ENCODE measurements at regions of chr11 and their contacts with region 1.

Region 1: GRCh38 chr11:134253188-134253993 is at the starts of genes ACAD8 and THYN1:
- DNase-seq: peak; percentile 94
- H3K4me3 Mint-ChIP-seq: peak within 1 kb of the TSS; percentile 94
- H3K27ac Mint-ChIP-seq: peak within 1 kb of the TSS; percentile 86
- H3K4me1 Mint-ChIP-seq: peaks cover 46% of the 10 kb centered on the region
- H3K27me3 Mint-ChIP-seq: no peaks in the 10 kb centered on the region
- total RNA-seq, gene ACAD8: 25.6 and 26.2 TPM in 2 replicates
- total RNA-seq, gene THYN1: 55.0 and 58.8 TPM in 2 replicates

Region 2: DNA sequence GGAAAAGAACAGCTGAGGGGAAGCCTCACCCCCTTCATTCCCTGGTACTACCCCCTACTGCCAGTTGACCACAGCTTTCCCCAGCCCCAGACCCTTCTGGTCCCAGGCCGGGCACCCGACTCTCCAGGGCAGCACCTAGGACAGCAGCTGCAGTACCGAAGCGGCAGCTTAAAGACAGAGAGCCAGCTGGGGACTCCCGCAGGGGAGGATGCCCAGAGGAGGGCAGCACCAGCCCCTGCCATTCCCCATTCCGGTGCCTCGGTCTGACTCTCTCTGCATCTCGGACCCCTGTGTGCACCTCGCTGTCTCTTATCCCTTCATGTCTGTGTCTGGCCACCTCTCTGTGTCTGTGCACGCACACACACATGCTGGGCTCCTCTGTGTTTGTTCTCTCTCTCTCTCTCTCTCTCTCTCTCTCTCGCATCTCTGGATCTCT is 306.1 kb before region 1 on chr11:
- intact Hi-C with region 1: loop called (anchors 1 kb)
- DNase-seq: peak; percentile 63
- H3K4me3 Mint-ChIP-seq: peak overlapping the region; percentile 69
- H3K27ac Mint-ChIP-seq: peak overlapping the region; percentile 83
- H3K4me1 Mint-ChIP-seq: peaks cover 80% of the 10 kb centered on the region
- H3K27me3 Mint-ChIP-seq: no peaks in the 10 kb centered on the region

Region 3: DNA sequence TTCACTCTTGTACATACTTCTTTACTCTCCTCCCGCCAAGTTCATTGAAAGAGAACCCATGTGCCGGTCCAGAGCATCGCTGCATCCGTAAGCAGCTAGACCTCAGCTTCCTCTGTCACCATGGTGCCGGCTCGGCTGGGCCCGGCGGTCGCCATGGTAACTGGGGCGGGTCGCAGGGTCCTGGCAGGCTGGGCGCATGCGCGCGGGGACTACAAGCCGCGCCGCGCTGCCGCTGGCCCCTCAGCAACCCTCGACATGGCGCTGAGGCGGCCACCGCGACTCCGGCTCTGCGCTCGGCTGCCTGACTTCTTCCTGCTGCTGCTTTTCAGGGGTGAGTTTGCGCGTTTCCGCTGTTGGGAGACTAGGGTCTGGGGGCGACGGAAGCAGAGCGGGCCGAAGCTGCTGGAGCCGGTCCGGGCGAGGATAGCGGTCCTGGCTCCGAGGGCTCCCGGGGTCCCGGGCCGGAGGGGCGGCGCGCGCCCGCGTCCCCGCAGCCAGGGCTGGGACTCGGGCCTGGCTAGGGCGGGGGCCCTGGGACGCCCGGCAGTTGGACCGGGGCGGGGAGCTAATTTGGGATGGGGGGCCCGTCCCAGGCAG is 184.5 kb before region 1 on chr11 and contains the start of gene JAM3:
- intact Hi-C with region 1: loop called (anchors 2 kb)
- DNase-seq: peak; percentile 97
- H3K4me3 Mint-ChIP-seq: peak within 1 kb of the TSS; percentile 88
- H3K27ac Mint-ChIP-seq: peak within 1 kb of the TSS; percentile 86
- H3K4me1 Mint-ChIP-seq: peaks cover 8% of the 10 kb centered on the region
- H3K27me3 Mint-ChIP-seq: peaks cover 59% of the 10 kb centered on the region
- total RNA-seq, gene JAM3: 3.5 and 3.9 TPM in 2 replicates

Region 4: DNA sequence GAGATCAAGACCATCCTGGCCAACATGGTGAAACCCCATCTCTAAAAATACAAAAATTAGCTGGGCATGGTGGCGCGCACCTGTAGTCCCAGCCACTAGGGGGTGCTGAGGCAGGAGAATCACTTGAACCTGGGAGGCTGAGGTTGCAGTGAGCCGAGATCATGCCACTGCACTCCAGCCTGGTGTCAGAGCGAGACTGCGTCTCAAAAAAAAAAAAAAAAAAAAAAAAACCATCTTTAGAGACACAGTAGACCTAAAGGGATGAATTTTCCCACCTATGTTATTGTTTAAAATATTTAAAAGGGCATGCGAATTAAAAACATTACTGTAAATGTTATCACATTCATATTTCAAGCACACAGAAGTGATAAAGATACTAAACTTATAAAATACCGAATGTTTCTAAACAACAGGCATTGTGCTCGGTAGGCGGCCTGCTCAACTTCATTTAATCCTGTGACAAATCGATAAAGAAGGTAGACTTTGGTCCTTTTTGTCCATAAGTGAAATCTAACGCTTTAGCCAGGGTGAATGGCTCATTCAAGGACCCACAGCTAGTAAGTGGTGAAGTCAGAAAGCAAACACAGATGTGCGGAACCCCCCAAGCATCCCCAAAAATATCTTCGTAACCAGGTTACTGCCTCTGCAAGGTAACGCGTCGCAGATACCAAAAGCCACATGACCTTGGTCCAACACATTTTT is 45.7 kb before region 1 on chr11:
- intact Hi-C with region 1: loop called (anchors 1 kb)
- DNase-seq: peak; percentile 59
- H3K4me3 Mint-ChIP-seq: no peak overlapping the region
- H3K27ac Mint-ChIP-seq: no peak overlapping the region
- H3K4me1 Mint-ChIP-seq: peaks cover 5% of the 10 kb centered on the region
- H3K27me3 Mint-ChIP-seq: no peaks in the 10 kb centered on the region

Region 5: DNA sequence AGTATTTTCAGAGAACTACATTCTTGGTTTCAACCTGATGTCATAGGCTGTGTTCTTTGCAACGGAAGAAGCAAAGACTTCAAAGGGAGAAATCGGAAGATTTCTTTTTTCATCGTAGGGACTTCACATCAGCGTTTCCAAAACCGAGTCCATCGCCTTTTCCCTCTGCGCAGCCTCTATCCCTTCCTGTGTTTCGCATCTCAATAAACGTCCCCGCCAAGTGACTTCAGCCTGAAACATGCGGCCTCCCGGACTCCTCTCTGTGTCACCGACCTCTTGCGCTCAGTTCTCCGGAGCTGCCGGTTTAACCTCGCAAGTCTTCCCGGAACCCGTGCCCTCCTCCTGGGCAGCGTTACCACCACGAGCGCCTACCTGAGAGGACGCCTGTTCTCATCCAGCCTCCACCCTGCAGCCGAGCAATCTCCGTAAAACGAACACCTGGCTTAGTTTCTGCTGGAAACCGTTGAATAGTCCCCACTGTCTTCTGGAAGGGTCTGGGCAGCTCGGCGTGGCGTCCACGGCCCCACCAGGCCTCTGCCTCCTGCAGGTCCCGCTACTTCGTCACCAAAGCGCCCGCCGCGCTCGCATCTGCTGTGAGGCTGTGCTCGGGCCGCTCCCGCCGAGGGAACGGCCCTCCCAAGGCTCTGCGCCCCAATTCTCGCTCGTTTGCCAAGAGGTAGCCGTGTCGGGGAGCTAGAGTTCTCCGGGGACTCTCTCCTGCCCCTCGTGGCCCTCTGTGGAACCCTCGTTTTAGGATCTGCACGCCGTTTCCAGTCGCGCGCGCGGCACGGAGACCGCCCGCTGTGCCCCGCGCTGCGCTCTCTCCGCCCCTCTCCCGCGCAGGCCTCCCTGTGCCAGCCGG is 22.4 kb after region 1 on chr11 and contains the start of gene GLB1L3:
- intact Hi-C with region 1: loop called (anchors 1 kb)
- DNase-seq: peak; percentile 81
- H3K4me3 Mint-ChIP-seq: peak within 1 kb of the TSS; percentile 96
- H3K27ac Mint-ChIP-seq: peak within 1 kb of the TSS; percentile 93
- H3K4me1 Mint-ChIP-seq: peaks cover 53% of the 10 kb centered on the region
- H3K27me3 Mint-ChIP-seq: peaks cover 2% of the 10 kb centered on the region
- total RNA-seq, gene GLB1L3: 14.6 and 16.1 TPM in 2 replicates

Region 6: DNA sequence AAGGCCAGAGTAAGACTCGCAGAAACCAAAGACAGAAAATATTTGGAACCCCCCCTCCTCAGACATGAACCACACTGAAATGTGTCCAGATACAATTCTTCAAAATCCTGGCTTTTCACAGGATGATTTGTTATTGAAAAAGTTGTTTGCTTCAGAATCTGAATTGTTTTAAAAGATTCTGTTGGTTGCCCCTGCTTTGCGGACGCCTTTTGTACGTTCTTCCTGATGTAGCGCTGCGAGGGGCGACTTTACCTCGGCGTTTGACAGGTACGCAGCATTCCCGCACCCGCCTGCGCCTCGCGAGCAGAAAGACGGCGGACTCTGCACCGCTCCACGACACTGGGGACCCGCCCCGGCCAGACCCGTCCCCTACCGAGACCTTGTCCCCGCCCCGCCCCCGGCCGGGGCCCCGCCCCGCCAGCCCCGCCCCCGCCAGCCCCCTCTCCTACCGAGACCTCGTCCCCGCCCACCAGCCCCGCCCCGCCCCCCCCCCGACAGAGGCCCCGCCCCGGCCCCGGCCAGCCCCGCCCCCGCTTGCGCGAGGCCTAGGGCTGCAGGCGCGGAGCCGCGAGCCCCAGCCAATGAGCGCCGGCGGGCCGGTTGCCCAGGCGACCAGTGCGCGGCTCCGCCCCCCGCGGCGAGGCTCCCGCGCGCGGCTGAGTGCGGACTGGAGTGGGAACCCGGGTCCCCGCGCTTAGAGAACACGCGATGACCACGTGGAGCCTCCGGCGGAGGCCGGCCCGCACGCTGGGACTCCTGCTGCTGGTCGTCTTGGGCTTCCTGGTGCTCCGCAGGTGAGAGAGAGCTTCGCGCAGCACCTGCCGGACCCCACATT is 78.2 kb after region 1 on chr11 and contains the start of gene GLB1L2:
- intact Hi-C with region 1: loop called (anchors 1 kb)
- DNase-seq: peak; percentile 84
- H3K4me3 Mint-ChIP-seq: peak within 1 kb of the TSS; percentile 85
- H3K27ac Mint-ChIP-seq: peak within 1 kb of the TSS; percentile 59
- H3K4me1 Mint-ChIP-seq: peaks cover 24% of the 10 kb centered on the region
- H3K27me3 Mint-ChIP-seq: peaks cover 39% of the 10 kb centered on the region
- total RNA-seq, gene GLB1L2: 8.9 and 11.5 TPM in 2 replicates

Region 7: DNA sequence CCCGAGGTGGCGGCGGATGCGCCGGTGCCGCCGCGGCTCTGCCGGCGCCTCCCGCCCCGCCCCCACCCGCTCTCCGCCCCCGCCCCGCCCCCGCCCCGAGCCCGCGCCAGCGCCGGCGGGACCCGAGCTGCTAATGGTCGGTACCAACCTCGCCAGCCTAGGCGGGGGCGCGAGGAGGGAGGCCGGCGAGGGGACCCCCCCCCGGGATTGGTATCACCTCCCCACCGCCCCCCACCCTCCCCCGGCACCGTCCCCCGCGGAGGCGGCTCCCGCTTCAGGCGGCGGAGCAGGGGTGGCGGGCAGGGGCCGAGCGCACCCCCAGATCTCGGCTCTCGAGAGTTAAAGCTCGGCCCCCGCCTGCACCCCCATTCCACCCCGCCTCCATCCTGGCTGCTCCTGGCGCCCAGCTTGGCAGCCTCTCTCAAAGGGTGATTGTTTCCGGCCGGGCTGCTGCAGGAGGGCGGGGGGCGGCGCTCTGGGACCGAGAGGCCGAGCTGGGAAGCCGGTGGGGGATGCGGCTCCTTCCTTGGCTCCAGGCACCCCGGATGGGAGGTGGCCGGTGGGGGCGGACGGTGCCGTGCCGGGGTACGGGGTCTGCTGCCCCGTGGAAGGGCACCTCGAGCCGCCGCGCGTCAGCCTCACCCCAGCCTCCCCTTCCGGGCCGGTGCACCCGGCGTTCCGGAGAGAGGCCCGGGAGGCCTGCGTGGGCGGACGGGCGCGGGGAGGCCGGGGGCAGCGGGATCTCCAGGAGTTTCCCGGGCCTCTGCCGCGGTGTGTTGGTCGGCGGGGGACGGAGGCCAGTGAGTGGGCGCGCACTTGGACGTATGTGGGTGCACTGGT is 159.0 kb after region 1 on chr11 and contains the start of gene B3GAT1:
- intact Hi-C with region 1: loop called (anchors 5 kb)
- DNase-seq: peak; percentile 9
- H3K4me3 Mint-ChIP-seq: peak within 1 kb of the TSS; percentile 54
- H3K27ac Mint-ChIP-seq: no peak within 1 kb of the TSS
- H3K4me1 Mint-ChIP-seq: peaks cover 6% of the 10 kb centered on the region
- H3K27me3 Mint-ChIP-seq: peaks cover 65% of the 10 kb centered on the region
- total RNA-seq, gene B3GAT1: 0.13 and 0.39 TPM in 2 replicates